ENCODE measurements at regions of chr1 and their contacts with region 1.

Region 1: GRCh38 chr1:115138968-115139367 is 49.7 kb upstream of the TSPAN2 start:
- DNase-seq: peak; percentile 95
- H3K4me3 ChIP-seq: no peak overlapping the region
- H3K27ac ChIP-seq: no peak overlapping the region
- H3K4me1 ChIP-seq: peaks cover 0 to 22% (median 17%) of the 10 kb centered on the region in 4 donors
- H3K27me3 ChIP-seq: no peaks in the 10 kb centered on the region
- CTCF ChIP-seq: peak; percentile 68 to 87 (median 78)
- EP300 ChIP-seq: no peak
- POLR2A ChIP-seq: no peak

Region 2: DNA sequence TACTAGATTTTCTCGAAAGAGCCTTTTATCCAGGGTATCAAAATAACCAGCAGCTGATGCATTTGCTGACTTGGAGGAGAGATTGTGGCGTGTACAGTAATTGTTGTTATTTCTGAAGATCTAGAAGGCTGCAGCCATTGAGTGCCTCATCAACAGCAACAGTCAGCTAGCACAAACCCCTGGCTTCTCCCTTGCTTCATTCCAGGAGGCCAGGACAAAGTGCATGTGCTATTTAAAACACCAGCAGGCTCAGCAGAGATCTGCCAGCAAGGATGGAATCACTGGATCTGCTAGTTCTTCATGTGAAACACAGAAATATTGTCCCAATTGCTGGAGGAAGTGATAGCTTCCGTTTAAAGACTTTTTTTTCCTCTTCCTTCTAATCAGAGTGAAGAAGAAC is 201.9 kb after region 1 on chr1:
- intact Hi-C with region 1: loop called (anchors 10 kb)
- DNase-seq: no peak
- H3K4me3 ChIP-seq: no peak overlapping the region
- H3K27ac ChIP-seq: no peak overlapping the region
- H3K4me1 ChIP-seq: peaks cover 0 to 25% (median 21%) of the 10 kb centered on the region in 4 donors
- H3K27me3 ChIP-seq: peaks cover 0 to 10% (median 10%) of the 10 kb centered on the region in 3 donors
- CTCF ChIP-seq: no peak
- EP300 ChIP-seq: no peak
- POLR2A ChIP-seq: no peak

Region 3: GRCh38 chr1:115469703-115470476 is 330.9 kb after region 1 on chr1:
- intact Hi-C with region 1: loop called (anchors 1 kb)
- DNase-seq: no peak
- H3K4me3 ChIP-seq: no peak overlapping the region
- H3K27ac ChIP-seq: no peak overlapping the region
- H3K4me1 ChIP-seq: peaks cover 0 to 7% (median 0%) of the 10 kb centered on the region in 4 donors
- H3K27me3 ChIP-seq: no peaks in the 10 kb centered on the region
- CTCF ChIP-seq: peak; percentile 47 to 87 (median 78)
- EP300 ChIP-seq: no peak
- POLR2A ChIP-seq: no peak

Region 4: DNA sequence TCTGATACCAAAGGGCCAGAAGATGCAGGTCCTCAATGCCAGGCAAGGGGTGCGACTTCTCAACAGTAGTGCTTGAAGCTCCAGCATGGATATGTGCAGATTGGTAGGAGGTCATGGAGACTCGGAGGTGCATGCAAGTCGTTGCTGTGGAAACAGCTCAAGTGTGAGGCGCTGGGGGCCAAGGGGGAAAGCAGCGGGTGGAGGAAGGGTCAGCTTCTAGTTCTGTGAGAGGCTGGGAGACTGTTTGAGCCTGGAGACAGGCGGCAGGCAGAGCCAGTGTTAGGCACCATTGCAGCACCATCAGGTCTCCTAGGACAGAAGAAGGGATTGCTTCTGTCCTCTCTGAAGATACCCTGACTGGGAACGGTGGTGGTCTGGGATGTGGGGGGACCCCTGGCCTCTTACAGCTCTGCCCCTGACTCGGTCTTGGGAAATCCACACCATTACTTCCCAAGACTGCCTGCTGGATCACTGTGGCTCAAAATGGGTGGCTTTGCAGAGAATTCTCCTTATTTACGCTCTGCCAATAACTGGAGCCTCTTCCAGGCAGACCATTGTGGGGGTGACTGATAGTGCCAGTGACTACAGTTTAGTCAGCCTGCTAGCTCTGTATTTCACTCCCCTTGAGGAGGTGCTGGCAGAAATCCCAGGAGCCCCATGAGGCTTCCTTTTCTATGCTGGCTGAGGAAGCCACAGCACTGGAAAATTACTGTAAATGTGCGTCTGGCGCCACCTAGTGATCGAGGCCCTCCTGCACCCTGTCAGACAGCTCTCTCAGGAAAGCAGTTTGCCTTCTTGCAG is 456.5 kb after region 1 on chr1:
- intact Hi-C with region 1: loop called (anchors 1 kb)
- DNase-seq: peak; percentile 91
- H3K4me3 ChIP-seq: no peak overlapping the region
- H3K27ac ChIP-seq: no peak overlapping the region
- H3K4me1 ChIP-seq: peaks cover 0 to 5% (median 4%) of the 10 kb centered on the region in 4 donors
- H3K27me3 ChIP-seq: no peaks in the 10 kb centered on the region
- CTCF ChIP-seq: peak; percentile 69 to 91 (median 82)
- EP300 ChIP-seq: no peak
- POLR2A ChIP-seq: no peak

Region 5: DNA sequence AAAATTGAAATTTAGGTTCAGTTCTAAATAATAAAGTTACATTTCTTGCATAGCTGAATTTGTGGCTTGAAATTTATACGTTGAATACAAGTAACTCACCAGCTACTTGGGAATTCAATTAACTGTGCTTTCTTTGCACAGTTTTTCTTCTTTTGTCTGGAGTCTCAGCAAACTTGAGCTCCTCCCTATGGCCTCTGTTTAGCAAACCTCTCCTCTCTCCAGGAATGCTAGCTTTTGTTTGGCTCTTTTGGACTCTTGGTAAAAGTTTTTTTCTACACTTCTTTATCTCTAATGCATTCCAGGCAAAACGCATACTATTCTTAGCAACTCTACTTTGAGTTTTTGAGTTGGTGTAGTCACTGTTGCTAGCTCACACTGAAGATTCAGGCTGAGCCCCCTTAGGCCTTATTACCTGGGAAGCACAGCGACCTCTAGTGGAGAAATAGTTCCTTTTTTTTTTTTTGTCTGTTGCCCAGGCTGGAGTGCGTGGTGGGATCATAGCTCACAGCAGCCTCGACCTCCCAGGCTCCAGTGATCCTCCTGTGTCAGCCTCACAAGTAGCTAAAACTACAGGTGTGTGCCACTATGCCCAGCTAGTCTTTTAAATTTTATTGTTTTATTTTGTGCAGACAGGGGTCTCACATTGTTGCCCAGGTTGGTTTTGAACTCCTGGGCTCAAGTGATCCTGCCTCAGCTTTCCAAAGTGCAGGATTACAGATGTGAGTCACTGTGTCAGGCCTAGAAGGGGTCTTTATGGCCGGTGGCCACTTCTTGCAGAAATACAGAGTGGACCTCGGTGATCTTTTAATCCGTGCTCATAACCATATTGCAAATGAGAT is 567.8 kb after region 1 on chr1:
- intact Hi-C with region 1: loop called (anchors 10 kb)
- DNase-seq: no peak
- H3K4me3 ChIP-seq: no peak overlapping the region
- H3K27ac ChIP-seq: no peak overlapping the region
- H3K4me1 ChIP-seq: peaks cover 0 to 3% (median 0%) of the 10 kb centered on the region in 4 donors
- H3K27me3 ChIP-seq: no peaks in the 10 kb centered on the region
- CTCF ChIP-seq: peak in 2 of 4 experiments; percentile 41 to 67
- EP300 ChIP-seq: no peak
- POLR2A ChIP-seq: no peak

Region 6: DNA sequence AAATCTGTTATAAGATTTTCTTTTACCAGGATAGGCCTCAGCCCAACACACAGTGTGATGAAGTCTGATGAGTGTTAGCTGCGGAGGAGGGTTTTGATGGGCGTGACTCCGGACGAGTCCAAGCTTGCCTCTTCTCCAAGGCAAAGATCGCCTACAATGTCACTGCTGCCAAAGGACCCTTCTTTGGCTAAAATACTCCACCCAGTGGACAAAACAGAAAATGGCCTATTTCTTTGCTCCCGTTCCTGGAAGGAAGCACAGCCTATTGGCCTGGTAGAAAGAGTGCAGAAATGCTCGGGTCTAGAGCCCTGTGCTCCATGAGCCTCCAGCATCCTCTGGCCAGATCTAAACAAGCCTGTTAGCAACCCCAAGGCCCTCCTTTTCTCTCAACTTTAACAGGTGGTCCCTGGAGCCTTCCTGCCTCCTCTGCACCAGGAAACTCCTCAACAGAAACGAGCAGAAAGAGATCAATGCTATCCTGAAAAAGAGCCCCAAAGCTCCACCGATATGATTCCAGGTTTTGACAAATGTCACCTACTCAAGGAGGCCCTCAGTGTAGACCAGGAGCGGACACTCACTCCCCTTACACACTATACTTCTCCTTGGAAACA is 633.0 kb after region 1 on chr1:
- intact Hi-C with region 1: loop called (anchors 5 kb)
- DNase-seq: peak; percentile 85
- H3K4me3 ChIP-seq: peak overlapping the region in 3 of 4 donors; percentile 8 to 35 (median 17)
- H3K27ac ChIP-seq: peak overlapping the region; percentile 53 to 86 (median 69)
- H3K4me1 ChIP-seq: peaks cover 0 to 22% (median 12%) of the 10 kb centered on the region in 4 donors
- H3K27me3 ChIP-seq: no peaks in the 10 kb centered on the region
- CTCF ChIP-seq: peak; percentile 66 to 84 (median 79)
- EP300 ChIP-seq: no peak
- POLR2A ChIP-seq: no peak